Naive thymus-derived CD4-positive, alpha-beta T cell (primary cell): ENCODE measurements at regions of chr5 and their contacts with region 1.

Region 1: GRCh38 chr5:91016954-91017700 is 366.0 kb downstream of the ARRDC3 start:
- DNase-seq: no peak
- ATAC-seq: no peak
- H3K4me3 ChIP-seq: no peak overlapping the region
- H3K4me3 Mint-ChIP-seq: no peak overlapping the region
- H3K27ac ChIP-seq: no peak overlapping the region
- H3K27ac Mint-ChIP-seq: no peak overlapping the region
- H3K4me1 ChIP-seq: no peaks in the 10 kb centered on the region
- H3K4me1 Mint-ChIP-seq: no peaks in the 10 kb centered on the region
- H3K27me3 ChIP-seq: no peaks in the 10 kb centered on the region
- H3K27me3 Mint-ChIP-seq: peaks cover 16 to 30% (median 20%) of the 10 kb centered on the region in 5 donors

Region 2: DNA sequence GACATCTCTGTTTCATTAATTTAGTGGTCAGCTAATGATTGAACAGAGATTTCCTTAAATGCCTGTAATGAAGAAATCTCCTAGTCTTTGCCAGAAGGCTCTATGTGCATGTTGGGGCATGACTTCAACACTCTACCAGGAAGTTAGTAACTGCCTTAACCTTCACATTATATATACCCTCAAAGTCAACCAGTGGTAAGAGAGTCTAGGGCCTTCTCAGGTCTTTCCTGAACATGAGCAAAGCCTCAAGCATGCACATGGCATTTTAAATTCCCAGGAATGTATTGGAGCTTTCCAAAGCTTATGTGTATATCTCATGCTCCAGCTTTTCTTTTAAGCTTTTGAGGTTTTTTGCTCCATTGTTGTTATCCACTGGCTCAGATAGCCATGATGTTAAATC is 22.3 kb before region 1 on chr5:
- CTCF ChIA-PET with region 1: no interaction called
- POLR2A ChIA-PET with region 1: no interaction called
- intact Hi-C with region 1: loop called in 1 of 2 experiments (anchors 1 kb)
- DNase-seq: no peak
- ATAC-seq: no peak
- H3K4me3 ChIP-seq: no peak overlapping the region
- H3K4me3 Mint-ChIP-seq: no peak overlapping the region
- H3K27ac ChIP-seq: no peak overlapping the region
- H3K27ac Mint-ChIP-seq: no peak overlapping the region
- H3K4me1 ChIP-seq: no peaks in the 10 kb centered on the region
- H3K4me1 Mint-ChIP-seq: no peaks in the 10 kb centered on the region
- H3K27me3 ChIP-seq: no peaks in the 10 kb centered on the region
- H3K27me3 Mint-ChIP-seq: peaks cover 0 to 18% (median 4%) of the 10 kb centered on the region in 5 donors